ENCODE measurements at regions of chr6 and their contacts with region 1.

Region 1: DNA sequence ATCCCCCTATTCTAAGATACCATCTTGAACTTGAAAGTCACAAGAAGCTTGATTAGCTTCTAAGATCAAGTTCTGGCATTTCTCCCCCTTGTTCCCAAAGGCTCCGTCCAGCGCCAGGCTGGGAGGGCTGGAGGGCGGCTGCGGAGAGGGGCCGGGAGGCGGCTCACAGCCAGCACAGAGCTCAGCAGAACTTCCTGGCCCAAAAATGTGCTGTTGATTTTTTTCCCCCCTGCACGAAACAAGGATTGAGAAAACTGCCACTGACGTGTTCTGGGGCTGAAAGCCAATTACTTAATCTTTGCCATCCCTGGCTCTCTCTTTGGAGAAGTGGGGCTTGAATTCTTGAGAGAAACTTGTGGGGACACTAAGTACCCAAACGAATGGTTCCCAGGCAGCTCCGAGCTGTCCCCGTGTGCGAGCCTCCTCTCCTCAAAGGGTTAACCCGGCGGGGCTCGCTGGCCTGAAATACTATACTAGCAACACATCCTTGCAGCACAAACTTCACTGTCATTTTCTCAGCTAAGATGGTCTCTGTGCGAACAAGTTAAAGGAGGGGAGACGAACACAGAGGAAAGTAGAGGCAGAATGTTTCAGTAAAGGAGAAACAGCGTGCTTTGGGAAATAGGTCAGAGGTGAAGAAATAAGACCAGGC is 452 bp downstream of the TRAF3IP2 start:
- DNase-seq: peak; percentile 94

Region 2: GRCh38 chr6:111483736-111484632 is 121.2 kb before region 1 on chr6:
- intact Hi-C with region 1: loop called in 1 of 2 experiments (anchors 2 kb)
- DNase-seq: peak; percentile 98

Region 3: GRCh38 chr6:111565326-111566221 is 39.7 kb before region 1 on chr6:
- intact Hi-C with region 1: loop called in 1 of 2 experiments (anchors 5 kb)
- DNase-seq: no peak

Region 4: GRCh38 chr6:111580826-111581505 is 24.3 kb before region 1 on chr6:
- intact Hi-C with region 1: no loop called
- DNase-seq: no peak

Region 5: DNA sequence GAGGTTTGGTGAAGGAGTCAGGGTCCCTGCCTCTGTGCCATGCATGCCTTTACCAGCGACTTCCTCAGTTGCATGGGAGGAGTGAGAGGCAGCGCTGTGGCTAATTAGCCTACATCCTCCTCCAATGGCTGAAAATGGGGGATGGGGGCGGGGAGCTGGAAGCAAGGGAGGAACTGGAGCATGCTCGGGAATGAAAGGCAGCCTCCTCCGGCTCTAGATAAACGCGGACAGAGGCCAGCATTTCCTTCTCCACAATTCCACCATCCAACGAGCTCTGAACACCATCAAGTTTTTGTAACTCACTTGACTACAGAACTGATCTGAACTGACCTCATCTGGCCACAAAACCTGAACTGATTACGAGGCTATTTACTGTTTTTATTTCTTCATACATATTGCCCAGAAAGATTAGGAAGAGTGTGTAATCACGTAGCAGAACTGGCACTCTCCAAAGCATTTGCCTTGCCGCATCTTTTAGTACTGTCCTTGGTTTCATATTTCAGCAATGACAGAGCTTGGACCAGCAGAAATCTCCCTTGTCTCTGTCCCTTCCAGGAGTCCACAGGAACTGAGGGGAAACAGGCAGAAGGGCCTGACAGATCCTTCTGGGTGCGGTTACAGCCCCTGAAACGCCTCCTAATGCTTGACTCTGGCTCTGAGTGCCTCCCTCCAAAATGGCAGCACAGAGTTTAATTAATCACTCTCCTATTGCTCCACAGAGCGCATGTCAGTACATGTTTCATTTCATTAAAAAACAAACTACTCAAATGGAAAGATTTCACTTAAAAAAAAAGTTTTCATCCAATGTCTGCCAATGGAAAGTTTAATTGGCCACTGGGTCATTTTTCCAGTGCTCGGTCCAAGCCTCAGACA is 58.7 kb after region 1 on chr6:
- intact Hi-C with region 1: loop called in 1 of 2 experiments (anchors 10 kb)
- DNase-seq: peak; percentile 86

Region 6: DNA sequence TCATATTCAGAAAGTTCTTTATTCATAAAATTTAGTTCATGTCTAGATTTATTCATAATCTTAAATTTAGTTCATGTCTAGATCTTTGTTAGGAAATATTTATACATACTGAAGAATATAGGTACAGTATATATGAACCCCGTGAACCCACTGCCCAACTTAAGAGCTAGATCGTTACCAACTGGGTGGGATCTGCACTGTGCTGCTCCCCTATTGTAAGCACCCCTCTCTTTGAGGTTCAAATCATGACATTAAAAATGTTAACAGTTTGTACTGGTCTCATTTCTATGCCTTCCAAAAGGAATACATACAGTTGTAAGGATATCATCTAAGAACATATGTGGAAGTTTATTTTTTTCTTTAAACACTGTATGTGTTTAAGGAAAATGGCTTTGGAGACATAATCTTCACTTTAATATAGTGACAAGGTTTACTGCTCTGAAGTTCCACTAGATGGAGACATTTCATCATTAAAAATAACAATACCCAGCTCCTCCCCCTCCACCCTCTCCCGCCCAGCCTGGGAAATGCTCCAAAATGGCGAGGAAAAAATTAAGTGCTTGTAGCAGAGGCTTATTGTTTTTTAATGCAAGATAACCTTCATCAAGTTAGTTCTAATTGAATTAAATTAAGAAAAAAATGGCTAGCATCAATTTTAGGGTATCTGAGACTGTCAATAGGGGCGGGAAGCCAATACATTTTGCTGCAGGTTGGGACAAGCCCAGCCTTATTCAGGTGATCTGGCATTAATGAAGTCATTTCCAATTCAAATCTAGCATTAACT is 104.6 kb after region 1 on chr6:
- intact Hi-C with region 1: no loop called
- DNase-seq: no peak